Sciatic nerve (tissue), 2 donors: ENCODE measurements at regions of chr3 and their contacts with region 1.

Region 1: GRCh38 chr3:163438787-163439186 is 1639.5 kb downstream of the SI start:
- DNase-seq: no peak
- ATAC-seq: no peak

Region 2: GRCh38 chr3:162224746-162225145 is 1214.0 kb before region 1 on chr3:
- intact Hi-C with region 1: loop called (anchors 5 kb)
- DNase-seq: no peak
- ATAC-seq: no peak